Endothelial cell of umbilical vein (primary cell): ENCODE measurements at regions of chr3 and their contacts with region 1.

Region 1: DNA sequence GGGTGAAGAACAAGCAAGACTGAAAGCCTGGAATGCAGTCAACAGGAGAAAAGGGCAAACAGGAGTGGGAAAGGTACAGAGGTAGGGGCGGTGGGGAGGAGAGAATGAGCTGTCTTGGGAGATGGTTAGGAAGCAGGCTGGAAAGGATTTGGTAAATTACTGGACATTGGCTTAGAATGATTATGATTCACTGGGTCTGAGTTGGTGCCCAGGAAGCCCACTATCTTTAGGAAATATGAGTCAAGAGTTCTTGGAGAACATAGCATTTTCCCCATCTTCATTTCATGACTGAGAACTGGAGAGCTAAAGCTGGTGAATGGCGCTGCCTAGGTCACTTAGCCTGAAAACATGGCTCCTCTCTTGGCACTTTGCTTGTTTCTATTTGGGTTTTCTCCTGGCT is 74.7 kb upstream of the C3orf80 start:
- DNase-seq: peak; percentile 56
- H3K4me3 ChIP-seq: no peak overlapping the region
- H3K27ac ChIP-seq: peak overlapping the region; percentile 1
- H3K4me1 ChIP-seq: peaks cover 12% of the 10 kb centered on the region
- H3K27me3 ChIP-seq: no peaks in the 10 kb centered on the region
- CTCF ChIP-seq: no peak
- POLR2A ChIP-seq: no peak

Region 2: GRCh38 chr3:160139291-160139690 is 11.2 kb before region 1 on chr3:
- CTCF ChIA-PET with region 1: interaction called, 11 read pairs
- POLR2A ChIA-PET with region 1: no interaction called
- dilution Hi-C with region 1: no loop called
- intact Hi-C with region 1: no loop called
- DNase-seq: no peak
- H3K4me3 ChIP-seq: no peak overlapping the region
- H3K27ac ChIP-seq: no peak overlapping the region
- H3K4me1 ChIP-seq: no peaks in the 10 kb centered on the region
- H3K27me3 ChIP-seq: no peaks in the 10 kb centered on the region
- CTCF ChIP-seq: no peak
- POLR2A ChIP-seq: no peak